GM10248 (cell line): ENCODE measurements at regions of chr10 and their contacts with region 1.

Region 1: DNA sequence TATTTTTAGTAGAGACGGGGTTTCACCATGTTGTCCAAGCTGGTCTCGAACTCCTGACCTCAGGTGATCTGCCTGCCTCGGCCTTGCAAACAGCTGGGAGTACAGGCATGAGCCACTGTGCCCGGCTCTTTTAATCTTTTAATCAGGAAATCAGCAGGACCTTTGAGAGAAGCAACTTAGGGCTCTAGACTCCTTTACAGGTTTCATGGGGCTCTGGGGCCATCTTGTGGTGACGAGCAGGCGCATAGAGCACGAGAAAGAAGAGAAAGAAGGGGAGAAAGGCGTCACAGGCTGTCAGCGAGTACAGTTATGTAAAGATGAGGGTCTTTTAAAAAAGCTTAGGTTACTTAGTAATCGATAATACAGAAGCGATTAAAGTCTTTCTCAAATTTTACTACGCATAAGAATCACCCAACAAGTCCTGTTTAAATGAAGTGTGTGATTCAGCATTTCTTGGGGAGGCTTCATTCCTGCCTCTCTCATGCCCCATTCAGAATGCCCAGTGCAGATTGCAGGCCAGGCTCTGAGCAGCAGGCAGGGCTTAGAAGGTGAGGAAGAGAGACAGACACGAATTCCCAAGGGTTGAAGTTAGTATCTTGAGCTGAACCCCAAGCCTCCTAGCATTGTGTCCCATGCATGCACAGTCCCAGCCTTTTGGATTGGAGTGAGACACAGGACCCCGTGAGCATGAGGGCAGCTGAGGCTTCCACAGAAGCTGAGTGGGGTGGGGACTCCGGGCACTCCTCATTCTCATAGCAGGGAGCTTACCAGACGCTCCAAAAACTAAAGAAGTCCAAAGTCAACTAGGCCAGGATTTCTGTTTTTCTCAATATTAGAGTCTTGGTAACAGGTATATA is 23.6 kb upstream of the PFKP start:
- DNase-seq: peak; percentile 75
- CTCF ChIP-seq: peak; percentile 83

Region 2: DNA sequence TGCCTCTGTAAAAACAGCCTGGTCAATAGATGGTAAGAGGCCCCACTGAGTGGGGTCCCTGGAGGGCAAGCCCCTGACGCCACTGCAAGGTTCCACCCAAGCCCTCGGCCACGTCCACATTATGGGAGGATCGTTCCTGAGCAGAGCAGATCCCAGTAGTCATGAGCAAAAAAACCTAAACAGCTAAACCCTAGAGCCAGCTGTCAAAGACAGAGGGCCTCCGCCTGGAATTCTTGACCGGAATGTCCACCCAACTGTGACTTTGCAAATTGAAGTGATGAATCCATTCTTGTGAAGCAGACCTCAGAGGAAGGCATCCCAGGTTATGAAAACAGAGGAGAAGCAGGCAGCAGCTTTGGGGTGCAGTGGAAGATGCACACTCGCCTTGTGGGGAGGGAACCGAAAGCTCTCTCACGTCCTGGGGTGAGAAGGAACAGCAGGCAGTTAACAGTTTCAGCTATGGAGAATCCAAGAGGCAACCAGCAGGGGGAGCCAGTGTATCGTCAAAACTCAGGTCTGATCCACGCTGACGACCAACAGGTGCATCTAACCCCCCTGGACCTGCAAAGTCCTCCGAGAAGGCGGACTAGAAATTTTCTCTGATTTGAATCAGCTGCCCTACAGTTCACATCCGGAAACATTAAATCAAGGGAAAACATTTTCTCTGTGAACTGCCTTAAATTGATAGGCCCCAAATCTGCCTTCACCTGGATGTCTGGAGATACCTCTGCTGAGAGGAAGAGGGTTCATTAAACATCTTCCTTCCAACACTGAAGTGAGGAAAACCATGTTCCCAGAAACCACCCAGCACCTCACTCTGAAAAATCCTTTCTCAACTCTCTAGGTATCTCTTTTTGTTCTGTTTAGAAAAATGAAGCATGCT is 115.5 kb before region 1 on chr10:
- CTCF ChIA-PET with region 1: interaction called, 106 read pairs
- POLR2A ChIA-PET with region 1: no interaction called
- DNase-seq: peak; percentile 87
- CTCF ChIP-seq: peak; percentile 75

Region 3: DNA sequence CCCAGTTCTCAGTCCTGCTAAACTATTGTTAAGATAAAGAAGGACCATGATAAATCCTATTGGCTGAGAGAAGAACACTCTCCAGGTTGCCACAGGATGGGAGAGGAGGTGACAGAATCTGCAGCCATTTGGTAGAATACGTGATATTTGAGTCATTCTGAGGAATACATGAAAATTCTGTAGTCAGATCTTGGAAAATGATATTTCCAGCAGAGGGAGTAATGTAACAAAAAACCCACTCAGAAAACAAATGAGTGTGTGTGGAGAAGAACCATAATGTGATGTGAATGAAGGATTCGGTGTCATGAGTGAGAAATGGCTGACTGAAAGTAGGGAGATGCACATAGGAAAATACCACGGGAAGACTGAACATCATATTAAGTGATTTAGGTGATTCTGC is 104.9 kb before region 1 on chr10:
- CTCF ChIA-PET with region 1: interaction called, 26 read pairs
- POLR2A ChIA-PET with region 1: no interaction called
- DNase-seq: no peak
- CTCF ChIP-seq: no peak

Region 4: GRCh38 chr10:2949948-2950354 is 93.8 kb before region 1 on chr10:
- CTCF ChIA-PET with region 1: interaction called, 10 read pairs
- POLR2A ChIA-PET with region 1: no interaction called
- DNase-seq: no peak
- CTCF ChIP-seq: no peak

Region 5: DNA sequence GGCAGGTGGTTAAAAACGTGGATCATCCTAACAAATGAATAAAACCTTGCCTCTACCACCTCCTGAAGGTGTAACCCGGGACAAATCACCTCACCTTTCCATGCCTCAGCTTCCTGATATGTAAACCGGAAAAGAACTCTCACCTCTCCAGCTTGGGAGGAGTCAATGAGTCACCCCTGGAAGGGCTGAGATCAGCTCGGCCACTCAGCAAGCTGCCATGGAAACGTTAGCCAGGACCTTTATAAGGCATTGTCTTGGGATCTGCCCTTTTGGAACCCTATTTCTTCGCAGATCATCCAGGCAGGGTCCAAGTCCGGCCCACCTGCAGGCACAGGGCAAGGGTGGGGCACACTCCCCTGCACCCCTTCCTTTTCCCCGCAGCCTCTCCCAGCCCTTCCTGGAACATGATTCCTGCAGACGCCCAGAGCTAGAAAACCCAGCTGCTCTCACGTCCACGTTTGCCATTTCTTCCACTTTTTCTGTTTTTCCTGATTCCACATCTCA is 58.0 kb before region 1 on chr10:
- CTCF ChIA-PET with region 1: interaction called, 14 read pairs
- POLR2A ChIA-PET with region 1: no interaction called
- DNase-seq: no peak
- CTCF ChIP-seq: no peak

Region 6: DNA sequence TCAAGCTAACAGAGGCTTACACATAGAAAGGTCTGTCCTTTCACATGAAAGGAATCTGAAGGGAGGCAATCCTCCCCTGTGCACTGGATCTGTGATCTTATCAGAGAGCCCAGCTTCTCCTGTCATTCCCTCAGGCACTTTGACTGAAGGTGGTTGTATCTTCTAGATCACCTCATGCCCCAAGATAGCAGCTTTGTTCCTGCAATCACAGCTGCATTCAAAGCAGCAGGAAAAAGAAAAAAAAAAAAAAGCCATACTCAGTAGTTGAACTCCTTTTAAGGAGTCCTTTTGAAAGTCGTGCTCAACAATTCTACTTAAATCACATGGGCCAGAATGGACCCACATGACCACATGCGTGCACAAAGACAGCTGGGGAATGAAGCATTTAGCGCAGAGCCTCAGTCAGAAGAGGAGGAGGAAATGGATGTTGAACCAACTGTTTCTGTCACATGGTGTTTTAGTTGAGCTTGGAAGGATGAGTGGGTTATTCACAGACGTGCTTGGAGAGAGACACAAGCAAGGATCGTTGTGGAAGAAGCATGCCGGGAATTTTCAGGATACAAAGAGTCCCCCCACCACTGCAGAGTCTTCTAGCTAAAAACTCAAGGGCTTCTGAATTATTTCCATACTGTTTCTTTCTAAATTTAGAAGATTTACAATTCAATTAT is 10.6 kb after region 1 on chr10:
- CTCF ChIA-PET with region 1: interaction called, 18 read pairs
- POLR2A ChIA-PET with region 1: no interaction called
- DNase-seq: no peak
- CTCF ChIP-seq: no peak

Region 7: GRCh38 chr10:3095373-3096139 is 51.8 kb after region 1 on chr10:
- CTCF ChIA-PET with region 1: no interaction called
- POLR2A ChIA-PET with region 1: no interaction called
- DNase-seq: no peak
- CTCF ChIP-seq: no peak

Region 8: DNA sequence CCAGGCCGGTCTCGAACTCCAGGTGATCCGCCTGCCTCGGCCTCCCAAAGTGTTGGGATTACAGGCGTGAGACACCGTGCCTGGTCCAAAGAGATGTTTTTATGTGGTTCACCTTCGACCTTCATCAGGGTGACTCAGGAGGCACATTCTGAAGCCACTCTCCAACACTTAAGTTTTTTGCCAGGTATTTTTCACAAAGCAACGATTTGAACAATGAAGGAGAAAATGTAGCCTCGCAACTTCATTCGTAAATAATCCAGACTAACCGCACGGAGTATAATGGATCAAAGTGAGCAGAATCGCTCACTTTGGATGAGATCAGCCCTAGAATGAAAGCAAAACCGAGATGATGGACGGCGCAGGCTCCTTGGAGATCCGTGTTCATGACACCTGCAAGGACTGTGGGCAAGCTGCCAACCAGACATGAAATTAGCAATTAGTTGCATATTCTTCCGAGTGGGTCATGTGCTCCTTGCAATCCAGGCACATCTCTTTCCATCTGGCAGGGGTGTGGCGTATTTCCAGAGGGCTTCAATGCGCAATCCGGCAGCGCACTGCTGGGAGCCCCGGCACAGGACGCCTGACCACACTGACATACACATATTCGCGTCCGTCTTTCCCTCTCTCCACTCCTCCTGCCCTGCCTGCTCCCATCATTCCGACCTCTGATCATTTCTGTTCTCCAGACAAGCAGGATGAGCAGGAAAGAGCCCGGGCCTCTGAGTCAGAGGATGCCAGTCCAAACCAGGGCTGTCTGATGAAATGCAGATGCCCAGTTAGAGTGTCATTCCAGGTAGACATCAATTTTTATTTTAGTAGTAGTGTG is 592.8 kb after region 1 on chr10:
- CTCF ChIA-PET with region 1: no interaction called
- POLR2A ChIA-PET with region 1: no interaction called
- DNase-seq: no peak
- CTCF ChIP-seq: no peak

Region 9: DNA sequence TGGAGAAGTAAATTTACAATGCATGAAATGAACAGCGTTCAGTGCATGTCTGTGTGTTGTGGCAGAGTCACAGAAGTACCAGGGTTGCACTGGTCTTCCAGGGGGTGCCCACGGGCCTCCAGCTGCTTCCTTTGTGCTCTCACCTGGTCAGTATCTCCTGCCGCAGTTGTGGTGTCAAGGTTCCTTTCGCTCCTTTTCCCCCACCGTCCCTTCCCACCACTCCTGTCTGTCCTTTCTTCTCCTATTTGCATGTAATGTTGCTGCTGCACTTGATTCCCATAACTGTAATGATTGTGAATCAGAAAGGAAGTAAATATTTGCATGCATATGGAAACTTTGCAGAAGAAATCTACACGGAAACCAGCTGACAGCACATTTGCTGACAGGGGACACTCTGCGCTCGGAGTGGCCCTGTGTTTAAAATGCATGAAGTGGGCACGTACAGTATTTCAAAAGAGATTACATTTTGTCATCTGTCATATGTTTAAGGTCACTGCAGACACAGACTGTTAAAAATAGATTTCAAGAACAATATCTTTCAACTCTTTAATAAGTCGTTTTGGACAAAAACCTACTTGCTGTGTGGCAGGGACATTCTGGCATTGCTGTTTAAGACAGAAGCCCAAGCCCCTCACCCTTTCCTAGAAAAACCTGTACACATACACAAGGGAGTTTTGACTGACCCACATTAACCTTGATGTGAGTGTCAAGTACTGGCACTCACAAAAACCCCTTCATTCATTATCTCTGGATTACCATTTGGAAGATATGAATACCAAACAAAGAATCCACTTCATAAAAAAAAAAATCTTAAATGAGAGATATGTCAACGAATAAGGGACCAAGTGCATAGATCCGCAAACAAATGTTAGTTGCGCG is 1078.0 kb after region 1 on chr10:
- CTCF ChIA-PET with region 1: no interaction called
- POLR2A ChIA-PET with region 1: no interaction called
- DNase-seq: peak; percentile 15
- CTCF ChIP-seq: no peak